ENCODE measurements at regions of chr2 and their contacts with region 1.

Region 1: DNA sequence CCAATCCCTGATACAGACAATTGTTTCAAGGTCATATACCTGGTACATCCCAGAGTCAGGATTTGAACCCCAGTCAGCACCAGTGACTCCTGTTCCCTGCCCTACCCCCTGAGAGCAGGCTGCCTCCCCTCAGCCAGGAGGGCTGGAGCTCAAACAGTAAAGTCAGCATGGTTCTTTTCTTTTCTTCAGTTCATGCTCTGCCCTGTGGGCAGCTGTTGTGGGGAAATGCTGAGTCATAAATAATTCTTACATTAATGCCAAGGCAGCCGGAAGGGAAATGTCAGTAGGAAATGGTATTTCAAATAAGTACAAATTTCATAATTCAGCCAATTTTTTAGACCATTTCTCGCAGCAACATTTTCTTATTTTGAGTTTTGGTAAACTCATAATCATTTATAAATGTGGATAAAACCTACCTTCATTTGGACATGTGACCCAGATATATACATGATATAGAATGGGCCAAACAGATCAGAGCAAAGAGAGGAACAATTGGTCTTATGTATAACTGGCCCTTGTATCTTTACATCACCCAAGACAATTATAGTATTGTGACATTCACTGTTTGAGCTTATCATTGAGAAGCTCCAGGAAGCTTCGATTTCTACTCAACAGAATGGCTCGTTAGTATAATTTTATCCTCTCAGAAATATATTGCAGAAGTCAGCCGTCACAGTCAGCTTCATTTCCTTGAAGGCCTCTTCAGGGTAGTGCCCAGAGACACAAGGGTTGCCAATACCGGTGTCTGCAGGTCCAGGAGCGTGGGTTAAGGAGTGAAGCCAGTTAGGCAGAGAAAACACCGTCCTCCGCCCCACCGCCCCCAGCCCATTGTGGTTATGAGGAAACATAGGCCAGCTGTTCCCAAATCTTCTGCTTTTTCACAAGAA is 28.0 kb upstream of the SCYGR1 start:
- DNase-seq: peak in 3 of 4 donors; percentile 11 to 51 (median 27)
- ATAC-seq: peak; percentile 58
- H3K4me3 ChIP-seq: no peak overlapping the region
- H3K27ac ChIP-seq: peak overlapping the region in 2 of 4 donors; percentile 38 to 59
- H3K4me1 ChIP-seq: no peaks in the 10 kb centered on the region
- H3K27me3 ChIP-seq: no peaks in the 10 kb centered on the region
- CTCF ChIP-seq: no peak
- POLR2A ChIP-seq: no peak

Region 2: DNA sequence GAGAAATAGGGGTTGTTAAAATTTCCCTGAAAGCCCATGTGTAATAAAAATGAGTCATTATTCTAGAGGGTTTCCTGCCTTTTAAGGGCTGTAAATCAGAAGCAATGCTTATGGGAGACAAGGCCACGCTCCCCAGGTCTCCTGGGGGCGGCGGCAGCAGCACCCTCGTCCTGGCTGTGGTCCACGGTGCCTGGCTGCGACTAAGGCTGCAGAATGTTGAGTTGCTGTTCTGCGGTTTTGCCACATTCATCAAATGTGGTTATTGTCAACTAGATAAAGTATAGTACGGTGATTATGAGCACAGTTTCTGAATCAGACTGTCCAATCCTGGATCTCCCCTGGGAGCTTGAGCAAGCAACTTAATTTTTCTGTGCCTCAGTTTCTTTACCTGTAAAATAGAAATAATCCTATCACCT is 44.3 kb after region 1 on chr2:
- intact Hi-C with region 1: loop called (anchors 10 kb)
- DNase-seq: no peak
- ATAC-seq: no peak
- H3K4me3 ChIP-seq: no peak overlapping the region
- H3K27ac ChIP-seq: no peak overlapping the region
- H3K4me1 ChIP-seq: no peaks in the 10 kb centered on the region
- H3K27me3 ChIP-seq: no peaks in the 10 kb centered on the region
- CTCF ChIP-seq: no peak
- POLR2A ChIP-seq: no peak

Region 3: GRCh38 chr2:227513113-227513512 is 97.3 kb after region 1 on chr2:
- intact Hi-C with region 1: no loop called
- DNase-seq: no peak
- ATAC-seq: no peak
- H3K4me3 ChIP-seq: no peak overlapping the region
- H3K27ac ChIP-seq: no peak overlapping the region
- H3K4me1 ChIP-seq: peaks cover 46% of the 10 kb centered on the region
- H3K27me3 ChIP-seq: no peaks in the 10 kb centered on the region
- CTCF ChIP-seq: no peak
- POLR2A ChIP-seq: no peak

Region 4: DNA sequence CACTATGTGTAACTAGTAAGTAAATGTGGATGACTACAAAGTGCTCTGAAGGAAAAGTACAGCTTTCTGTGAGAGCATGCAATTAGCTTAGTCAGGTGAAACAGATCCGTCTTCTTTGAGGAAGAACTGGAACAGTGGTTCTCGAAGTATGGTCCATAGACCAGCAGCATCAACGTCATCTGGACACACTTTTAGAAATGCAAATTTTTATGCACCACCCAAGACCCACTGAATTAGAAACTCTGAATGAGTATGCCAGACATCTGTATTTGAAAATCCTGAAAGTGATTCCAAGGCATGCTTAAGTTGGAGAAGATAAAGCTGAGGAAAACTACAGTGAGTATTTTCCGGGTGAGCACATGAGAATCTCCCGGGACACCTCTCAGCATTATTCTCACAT is 896.4 kb after region 1 on chr2:
- intact Hi-C with region 1: no loop called
- DNase-seq: no peak
- ATAC-seq: no peak
- H3K4me3 ChIP-seq: no peak overlapping the region
- H3K27ac ChIP-seq: no peak overlapping the region
- H3K4me1 ChIP-seq: no peaks in the 10 kb centered on the region
- H3K27me3 ChIP-seq: no peaks in the 10 kb centered on the region
- CTCF ChIP-seq: no peak
- POLR2A ChIP-seq: no peak

Measured in body of pancreas (tissue), 4 donors.